ENCODE measurements at regions of chr18 and their contacts with region 1.

Region 1: GRCh38 chr18:2197945-2198344 is 373.4 kb downstream of the METTL4 start:
- DNase-seq: no peak
- ATAC-seq: no peak
- H3K4me3 Mint-ChIP-seq: no peak overlapping the region
- H3K27ac Mint-ChIP-seq: no peak overlapping the region
- H3K4me1 Mint-ChIP-seq: no peaks in the 10 kb centered on the region
- H3K27me3 Mint-ChIP-seq: peaks cover 8% of the 10 kb centered on the region

Region 2: DNA sequence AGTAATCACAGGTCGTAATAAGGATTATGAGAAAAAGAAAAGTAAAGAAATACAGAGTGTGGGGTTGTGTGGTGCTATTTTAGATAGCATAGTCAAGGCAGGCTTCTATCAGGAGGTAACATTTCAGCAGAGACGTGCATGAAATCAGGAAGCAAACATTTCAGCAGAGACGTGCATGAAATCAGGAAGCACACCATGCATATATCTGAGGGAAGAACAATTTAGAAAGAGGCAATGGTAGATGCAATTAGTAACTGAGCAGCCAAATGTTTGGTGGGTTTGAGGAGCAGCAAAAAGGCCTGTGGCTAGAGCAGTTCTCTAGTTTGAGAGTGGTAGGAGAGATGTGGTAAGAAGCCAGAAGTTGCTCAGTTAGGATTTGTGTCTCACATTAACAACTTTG is 579.6 kb before region 1 on chr18:
- CTCF ChIA-PET with region 1: no interaction called
- POLR2A ChIA-PET with region 1: no interaction called
- intact Hi-C with region 1: loop called in 1 of 2 experiments (anchors 5 kb)
- DNase-seq: no peak
- ATAC-seq: no peak
- H3K4me3 Mint-ChIP-seq: no peak overlapping the region
- H3K27ac Mint-ChIP-seq: no peak overlapping the region
- H3K4me1 Mint-ChIP-seq: no peaks in the 10 kb centered on the region
- H3K27me3 Mint-ChIP-seq: no peaks in the 10 kb centered on the region

Region 3: GRCh38 chr18:2083691-2084090 is 114.3 kb before region 1 on chr18:
- CTCF ChIA-PET with region 1: no interaction called
- POLR2A ChIA-PET with region 1: no interaction called
- intact Hi-C with region 1: no loop called
- DNase-seq: peak; percentile 46
- ATAC-seq: peak; percentile 53
- H3K4me3 Mint-ChIP-seq: no peak overlapping the region
- H3K27ac Mint-ChIP-seq: no peak overlapping the region
- H3K4me1 Mint-ChIP-seq: no peaks in the 10 kb centered on the region
- H3K27me3 Mint-ChIP-seq: no peaks in the 10 kb centered on the region